CD4-positive, alpha-beta T cell (primary cell): ENCODE measurements at regions of chr12 and their contacts with region 1.

Region 1: GRCh38 chr12:14443531-14443930 is 78.0 kb downstream of the ATF7IP start:
- DNase-seq: no peak
- ATAC-seq: no peak
- H3K4me3 ChIP-seq: no peak overlapping the region
- H3K4me3 Mint-ChIP-seq: no peak overlapping the region
- H3K27ac ChIP-seq: no peak overlapping the region
- H3K27ac Mint-ChIP-seq: peak overlapping the region; percentile 12
- H3K4me1 ChIP-seq: no peaks in the 10 kb centered on the region
- H3K4me1 Mint-ChIP-seq: peaks cover 43% of the 10 kb centered on the region
- H3K27me3 ChIP-seq: no peaks in the 10 kb centered on the region
- H3K27me3 Mint-ChIP-seq: no peaks in the 10 kb centered on the region
- CTCF ChIP-seq: no peak

Region 2: DNA sequence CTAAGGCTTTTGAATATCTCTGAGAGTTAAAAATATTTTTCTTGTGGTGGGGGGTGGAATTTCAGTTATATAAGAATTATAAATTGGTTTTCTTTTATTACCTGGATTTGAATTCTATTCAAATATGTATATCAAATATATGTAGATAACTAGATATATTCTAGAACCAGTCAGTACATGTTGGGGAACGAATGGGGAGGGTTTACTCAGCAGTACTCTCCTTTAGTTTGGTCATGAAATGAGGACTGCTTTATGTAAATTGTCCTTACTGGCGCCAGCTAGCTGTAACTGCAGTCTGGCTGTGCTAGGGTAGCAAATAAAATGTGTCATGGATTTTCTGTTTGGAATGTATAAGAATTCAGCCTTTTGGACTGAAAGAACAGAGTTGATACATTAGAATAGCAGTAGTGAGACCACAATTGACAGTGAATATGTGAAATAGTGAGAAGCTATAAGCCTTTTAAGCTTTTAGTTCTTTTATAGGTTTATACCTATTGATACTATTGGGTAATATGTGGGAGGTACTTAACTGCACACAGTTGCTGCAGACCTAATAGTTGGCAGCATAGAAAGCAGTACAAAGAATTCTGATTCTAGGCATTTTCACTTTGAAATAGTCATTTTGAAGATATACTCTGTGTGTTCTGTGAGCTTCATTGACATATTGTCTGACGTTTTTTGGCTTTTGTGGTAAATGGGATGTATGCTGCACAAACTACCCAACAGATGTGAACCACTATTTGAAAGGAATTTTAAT is 49.0 kb before region 1 on chr12:
- CTCF ChIA-PET with region 1: no interaction called
- POLR2A ChIA-PET with region 1: no interaction called
- intact Hi-C with region 1: no loop called
- DNase-seq: peak in 7 of 14 experiments; percentile 15 to 86 (median 36)
- ATAC-seq: peak; percentile 70
- H3K4me3 ChIP-seq: peak overlapping the region; percentile 10
- H3K4me3 Mint-ChIP-seq: peak overlapping the region; percentile 83
- H3K27ac ChIP-seq: peak overlapping the region; percentile 58 to 66
- H3K27ac Mint-ChIP-seq: peak overlapping the region; percentile 91
- H3K4me1 ChIP-seq: peaks cover 25% of the 10 kb centered on the region
- H3K4me1 Mint-ChIP-seq: peaks cover 90% of the 10 kb centered on the region
- H3K27me3 ChIP-seq: no peaks in the 10 kb centered on the region
- H3K27me3 Mint-ChIP-seq: no peaks in the 10 kb centered on the region
- CTCF ChIP-seq: no peak

Region 3: DNA sequence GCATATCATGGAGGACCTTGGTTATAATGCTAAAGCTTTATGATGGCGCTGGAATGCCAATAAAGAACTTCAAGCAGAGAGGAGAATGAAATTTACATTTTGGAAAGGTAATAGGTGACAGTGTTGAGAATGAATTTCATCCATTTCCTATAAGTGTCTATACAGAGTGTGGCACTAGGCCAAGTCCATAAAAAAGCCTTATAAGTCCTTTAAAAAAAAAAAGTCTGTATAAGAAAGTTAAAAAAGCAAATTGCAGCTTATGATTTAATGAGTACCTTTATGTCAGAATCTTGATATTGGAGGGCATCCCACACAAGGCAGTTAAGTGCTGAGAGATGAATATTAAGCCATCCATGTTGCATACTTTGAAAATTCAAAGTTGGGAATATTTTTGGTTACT is 15.6 kb before region 1 on chr12:
- CTCF ChIA-PET with region 1: no interaction called
- POLR2A ChIA-PET with region 1: no interaction called
- intact Hi-C with region 1: loop called in 1 of 2 experiments (anchors 2 kb)
- DNase-seq: no peak
- ATAC-seq: no peak
- H3K4me3 ChIP-seq: no peak overlapping the region
- H3K4me3 Mint-ChIP-seq: no peak overlapping the region
- H3K27ac ChIP-seq: no peak overlapping the region
- H3K27ac Mint-ChIP-seq: peak overlapping the region; percentile 57
- H3K4me1 ChIP-seq: peaks cover 25% of the 10 kb centered on the region
- H3K4me1 Mint-ChIP-seq: peaks cover 92% of the 10 kb centered on the region
- H3K27me3 ChIP-seq: no peaks in the 10 kb centered on the region
- H3K27me3 Mint-ChIP-seq: no peaks in the 10 kb centered on the region
- CTCF ChIP-seq: no peak

Region 4: DNA sequence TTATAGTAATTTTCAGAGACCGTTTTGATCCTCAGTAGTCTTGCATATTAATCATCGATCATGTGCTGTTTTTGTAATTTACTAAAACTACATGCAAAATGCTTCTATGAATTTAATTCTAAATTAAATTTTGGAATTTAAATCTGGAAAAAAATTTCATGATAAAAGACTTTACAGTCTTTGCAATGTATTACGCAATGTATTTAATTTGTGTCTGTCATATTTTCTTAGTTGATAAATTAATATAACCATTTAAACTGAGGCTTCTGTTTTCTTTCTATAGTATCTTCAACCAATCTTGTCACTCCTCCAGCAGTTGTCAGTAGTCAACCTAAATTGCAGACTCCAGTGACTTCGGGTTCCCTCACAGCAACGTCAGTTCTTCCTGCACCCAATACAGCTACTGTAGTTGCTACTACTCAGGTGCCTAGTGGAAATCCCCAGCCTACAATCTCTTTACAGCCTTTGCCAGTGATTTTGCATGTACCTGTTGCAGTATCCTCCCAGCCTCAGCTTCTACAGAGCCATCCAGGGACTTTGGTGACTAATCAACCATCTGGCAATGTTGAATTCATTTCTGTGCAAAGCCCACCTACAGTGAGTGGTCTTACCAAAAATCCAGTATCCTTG is 16.8 kb after region 1 on chr12:
- CTCF ChIA-PET with region 1: no interaction called
- POLR2A ChIA-PET with region 1: no interaction called
- intact Hi-C with region 1: no loop called
- DNase-seq: peak in 2 of 14 experiments; percentile 29 to 38
- ATAC-seq: peak; percentile 56
- H3K4me3 ChIP-seq: no peak overlapping the region
- H3K4me3 Mint-ChIP-seq: peak overlapping the region; percentile 18
- H3K27ac ChIP-seq: no peak overlapping the region
- H3K27ac Mint-ChIP-seq: peak overlapping the region; percentile 77
- H3K4me1 ChIP-seq: peaks cover 5% of the 10 kb centered on the region
- H3K4me1 Mint-ChIP-seq: peaks cover 52% of the 10 kb centered on the region
- H3K27me3 ChIP-seq: no peaks in the 10 kb centered on the region
- H3K27me3 Mint-ChIP-seq: no peaks in the 10 kb centered on the region
- CTCF ChIP-seq: no peak